HAP-1 (cell line): ENCODE measurements at regions of chr16 and their contacts with region 1.

Region 1: DNA sequence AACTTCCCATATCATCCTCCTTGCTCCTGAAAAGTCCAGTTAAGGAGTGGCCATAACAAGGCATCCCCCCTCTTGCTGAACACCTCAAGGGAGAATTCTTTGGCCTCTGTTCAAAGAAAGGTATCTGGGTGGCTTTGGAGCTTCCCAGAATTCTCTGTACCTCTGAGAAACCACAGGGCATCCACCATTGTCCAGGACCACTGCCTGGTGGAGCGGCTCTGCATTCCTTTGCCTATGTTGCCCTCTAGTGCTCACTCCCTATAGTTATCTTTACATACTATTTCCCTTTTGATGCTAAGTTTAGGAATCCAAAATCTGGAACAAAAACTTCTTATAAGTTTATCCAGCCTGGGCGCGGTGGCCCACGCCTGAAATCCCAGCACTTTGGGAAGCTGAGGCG is 30.3 kb downstream of the CHD9NB start:
- DNase-seq: peak; percentile 76 to 82
- H3K4me3 ChIP-seq: no peak overlapping the region
- H3K4me1 ChIP-seq: peaks cover 6% of the 10 kb centered on the region; the same call in 1 of the 2 replicates
- H3K27me3 ChIP-seq: no peaks in the 10 kb centered on the region

Region 2: DNA sequence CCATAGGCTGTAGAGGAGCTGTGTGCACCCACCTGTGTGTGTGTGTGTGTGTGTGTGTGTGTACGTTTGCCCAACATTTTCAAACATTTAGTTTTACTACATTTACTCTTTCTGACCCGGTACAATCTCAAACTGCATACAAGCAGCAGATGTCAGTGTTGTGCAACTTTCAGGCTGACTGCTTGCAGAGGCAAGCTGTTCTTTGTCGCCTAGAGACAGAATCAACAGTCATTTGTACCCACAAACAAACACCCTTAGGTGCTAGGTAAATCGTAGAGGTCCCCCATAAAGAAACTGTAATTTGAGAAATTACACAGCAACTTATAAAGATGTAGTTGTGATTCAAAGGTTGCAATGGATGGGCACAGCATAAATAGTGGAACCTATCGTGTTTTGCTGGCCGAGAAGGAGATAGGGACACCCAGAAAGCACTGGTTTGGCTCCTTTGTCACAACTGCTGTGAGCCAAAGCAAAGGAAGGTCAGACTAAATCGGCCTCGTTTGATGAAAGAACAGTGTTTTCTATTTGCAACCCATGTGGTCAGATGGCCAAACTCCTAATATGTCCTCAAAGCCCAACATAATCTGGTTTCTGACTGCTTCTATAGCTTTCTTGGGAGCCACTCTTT is 953.8 kb before region 1 on chr16:
- in situ Hi-C with region 1: loop called (anchors 10 kb)
- DNase-seq: peak; percentile 42 to 50
- H3K4me3 ChIP-seq: no peak overlapping the region
- H3K4me1 ChIP-seq: 0 out of 2 replicates have a peak, but pooled peaks cover 2% of the 10 kb centered on the region
- H3K27me3 ChIP-seq: no peaks in the 10 kb centered on the region

Region 3: GRCh38 chr16:52191531-52192134 is 830.7 kb before region 1 on chr16:
- in situ Hi-C with region 1: loop called (anchors 25 kb)
- DNase-seq: peak; percentile 83 to 87
- H3K4me3 ChIP-seq: no peak overlapping the region
- H3K4me1 ChIP-seq: peaks cover 3% of the 10 kb centered on the region
- H3K27me3 ChIP-seq: no peaks in the 10 kb centered on the region